Naive thymus-derived CD4-positive, alpha-beta T cell (primary cell): ENCODE measurements at regions of chr12 and their contacts with region 1.

Region 1: GRCh38 chr12:56315622-56316473 is at the start of gene CNPY2:
- DNase-seq: peak; percentile 83 to 94 (median 92)
- ATAC-seq: peak; percentile 93
- H3K4me3 ChIP-seq: peak within 1 kb of the TSS; percentile 100
- H3K4me3 Mint-ChIP-seq: peak within 1 kb of the TSS; percentile 96 to 99 (median 98)
- H3K27ac ChIP-seq: peak within 1 kb of the TSS; percentile 97
- H3K27ac Mint-ChIP-seq: peak within 1 kb of the TSS; percentile 93 to 99 (median 99)
- H3K4me1 ChIP-seq: peaks cover 13 to 16% of the 10 kb centered on the region in 2 donors
- H3K4me1 Mint-ChIP-seq: peaks cover 5 to 23% (median 13%) of the 10 kb centered on the region in 7 donors
- H3K27me3 ChIP-seq: no peaks in the 10 kb centered on the region
- H3K27me3 Mint-ChIP-seq: no peaks in the 10 kb centered on the region
- total RNA-seq, gene CNPY2: 48.4 to 134 (median 87.6) TPM

Region 2: GRCh38 chr12:56127888-56128669 is 187.8 kb before region 1 on chr12 and contains the start of gene ESYT1:
- CTCF ChIA-PET with region 1: no interaction called
- POLR2A ChIA-PET with region 1: interaction called, 3 read pairs
- intact Hi-C with region 1: loop called in 1 of 2 experiments (anchors 1 kb)
- DNase-seq: peak; percentile 75 to 100 (median 98)
- ATAC-seq: peak; percentile 94
- H3K4me3 ChIP-seq: peak within 1 kb of the TSS; percentile 77
- H3K4me3 Mint-ChIP-seq: peak within 1 kb of the TSS; percentile 95 to 100 (median 98)
- H3K27ac ChIP-seq: peak within 1 kb of the TSS; percentile 84
- H3K27ac Mint-ChIP-seq: peak within 1 kb of the TSS; percentile 86 to 99 (median 91)
- H3K4me1 ChIP-seq: peaks cover 39 to 54% of the 10 kb centered on the region in 2 donors
- H3K4me1 Mint-ChIP-seq: peaks cover 40 to 76% (median 65%) of the 10 kb centered on the region in 7 donors
- H3K27me3 ChIP-seq: no peaks in the 10 kb centered on the region
- H3K27me3 Mint-ChIP-seq: no peaks in the 10 kb centered on the region
- total RNA-seq, gene ESYT1: 121 to 300 (median 221) TPM

Region 3: DNA sequence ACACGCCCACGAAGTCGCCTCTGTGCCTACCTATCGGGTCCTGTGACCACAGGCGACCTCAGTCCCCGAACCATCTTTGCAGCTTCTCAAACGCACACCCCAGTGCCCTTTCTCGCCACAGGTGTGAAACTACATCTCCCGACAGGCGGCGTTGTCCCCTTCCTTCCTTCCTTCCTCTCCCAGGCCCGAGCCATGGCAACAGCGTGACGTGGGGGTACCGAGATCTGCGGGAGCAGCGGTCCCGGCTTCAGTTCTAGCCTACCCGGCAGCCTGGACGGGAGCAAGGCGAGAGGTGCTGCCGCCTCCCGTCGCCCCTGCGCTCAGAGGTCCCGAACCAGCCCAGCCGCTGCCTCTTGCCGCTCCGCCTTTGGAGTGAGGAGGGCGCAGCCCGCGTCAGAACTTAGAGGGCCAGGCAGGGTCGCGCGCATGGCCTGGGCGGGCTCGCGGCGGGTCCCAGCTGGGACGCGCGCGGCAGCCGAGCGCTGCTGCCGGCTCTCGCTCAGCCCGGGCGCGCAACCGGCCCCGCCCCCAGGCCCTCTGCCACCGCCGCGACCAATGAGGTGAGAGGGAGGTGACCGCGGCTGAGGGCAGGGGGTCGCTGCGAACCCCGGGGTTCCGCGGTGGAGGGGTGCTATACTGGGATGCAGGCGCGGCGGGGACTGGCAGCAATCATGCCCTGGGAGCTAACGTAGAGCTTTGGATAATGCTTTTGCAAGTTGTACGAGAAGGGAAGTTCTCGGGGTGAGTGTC is 49.0 kb before region 1 on chr12 and contains the start of gene COQ10A:
- CTCF ChIA-PET with region 1: no interaction called
- POLR2A ChIA-PET with region 1: interaction called, 3 read pairs
- intact Hi-C with region 1: loop called in 1 of 2 experiments (anchors 1 kb)
- DNase-seq: peak; percentile 78 to 92 (median 89)
- ATAC-seq: peak; percentile 93
- H3K4me3 ChIP-seq: peak within 1 kb of the TSS; percentile 88
- H3K4me3 Mint-ChIP-seq: peak within 1 kb of the TSS; percentile 83 to 100 (median 96)
- H3K27ac ChIP-seq: peak within 1 kb of the TSS; percentile 94
- H3K27ac Mint-ChIP-seq: peak within 1 kb of the TSS; percentile 89 to 97 (median 94)
- H3K4me1 ChIP-seq: peaks cover 0 to 8% of the 10 kb centered on the region in 2 donors
- H3K4me1 Mint-ChIP-seq: peaks cover 0 to 22% (median 20%) of the 10 kb centered on the region in 7 donors
- H3K27me3 ChIP-seq: no peaks in the 10 kb centered on the region
- H3K27me3 Mint-ChIP-seq: peaks cover 0 to 2% (median 0%) of the 10 kb centered on the region in 5 donors
- total RNA-seq, gene COQ10A: 22.5 to 39.4 (median 31.5) TPM

Region 4: DNA sequence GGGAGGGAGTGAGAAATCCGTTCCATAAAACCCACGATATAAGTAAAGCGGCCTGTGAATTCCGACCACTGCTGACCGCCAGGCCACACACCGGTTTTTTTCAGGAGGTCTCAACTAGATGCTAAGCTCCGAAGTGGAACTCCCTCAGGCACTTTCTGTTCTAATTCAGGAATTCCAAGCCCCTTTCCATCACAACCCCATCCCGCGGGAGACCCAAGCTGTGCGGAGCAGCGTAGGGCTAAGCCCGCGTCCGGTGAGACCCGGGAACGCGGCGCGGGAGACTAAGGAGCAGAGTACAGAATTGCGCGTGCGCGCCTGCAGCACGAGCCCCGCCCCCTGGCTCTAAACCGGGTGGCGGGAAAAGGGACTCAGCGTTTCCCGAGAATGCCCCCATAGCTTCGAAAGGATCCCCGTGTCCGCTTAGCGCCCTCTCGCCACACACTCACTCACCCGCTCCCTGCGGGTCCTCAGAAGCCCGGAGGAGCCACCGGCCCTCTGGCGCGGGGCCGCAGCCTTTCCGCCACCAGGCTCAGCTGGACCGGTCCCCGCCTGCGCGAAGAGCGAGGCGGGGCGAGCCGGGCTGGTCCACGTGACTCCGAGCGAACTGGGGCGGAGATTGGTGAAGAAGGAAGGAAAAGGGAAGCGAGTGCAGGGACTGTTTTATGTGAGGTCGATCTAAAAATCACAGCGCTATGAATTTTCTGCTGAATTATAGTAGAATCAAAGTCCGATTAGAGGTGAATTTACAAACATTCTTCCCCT is 133.2 kb after region 1 on chr12 and contains the start of gene TIMELESS:
- CTCF ChIA-PET with region 1: interaction called, 3 read pairs
- POLR2A ChIA-PET with region 1: interaction called, 18 read pairs
- intact Hi-C with region 1: loop called (anchors 1 kb)
- DNase-seq: peak; percentile 74 to 89 (median 85)
- ATAC-seq: peak; percentile 98
- H3K4me3 ChIP-seq: peak within 1 kb of the TSS; percentile 97
- H3K4me3 Mint-ChIP-seq: peak within 1 kb of the TSS; percentile 77 to 94 (median 92)
- H3K27ac ChIP-seq: peak within 1 kb of the TSS; percentile 74
- H3K27ac Mint-ChIP-seq: peak within 1 kb of the TSS; percentile 86 to 98 (median 93)
- H3K4me1 ChIP-seq: peaks cover 0 to 7% of the 10 kb centered on the region in 2 donors
- H3K4me1 Mint-ChIP-seq: peaks cover 12 to 36% (median 24%) of the 10 kb centered on the region in 7 donors
- H3K27me3 ChIP-seq: no peaks in the 10 kb centered on the region
- H3K27me3 Mint-ChIP-seq: no peaks in the 10 kb centered on the region
- total RNA-seq, gene TIMELESS: 4.4 to 42.3 (median 5.4) TPM

Region 5: DNA sequence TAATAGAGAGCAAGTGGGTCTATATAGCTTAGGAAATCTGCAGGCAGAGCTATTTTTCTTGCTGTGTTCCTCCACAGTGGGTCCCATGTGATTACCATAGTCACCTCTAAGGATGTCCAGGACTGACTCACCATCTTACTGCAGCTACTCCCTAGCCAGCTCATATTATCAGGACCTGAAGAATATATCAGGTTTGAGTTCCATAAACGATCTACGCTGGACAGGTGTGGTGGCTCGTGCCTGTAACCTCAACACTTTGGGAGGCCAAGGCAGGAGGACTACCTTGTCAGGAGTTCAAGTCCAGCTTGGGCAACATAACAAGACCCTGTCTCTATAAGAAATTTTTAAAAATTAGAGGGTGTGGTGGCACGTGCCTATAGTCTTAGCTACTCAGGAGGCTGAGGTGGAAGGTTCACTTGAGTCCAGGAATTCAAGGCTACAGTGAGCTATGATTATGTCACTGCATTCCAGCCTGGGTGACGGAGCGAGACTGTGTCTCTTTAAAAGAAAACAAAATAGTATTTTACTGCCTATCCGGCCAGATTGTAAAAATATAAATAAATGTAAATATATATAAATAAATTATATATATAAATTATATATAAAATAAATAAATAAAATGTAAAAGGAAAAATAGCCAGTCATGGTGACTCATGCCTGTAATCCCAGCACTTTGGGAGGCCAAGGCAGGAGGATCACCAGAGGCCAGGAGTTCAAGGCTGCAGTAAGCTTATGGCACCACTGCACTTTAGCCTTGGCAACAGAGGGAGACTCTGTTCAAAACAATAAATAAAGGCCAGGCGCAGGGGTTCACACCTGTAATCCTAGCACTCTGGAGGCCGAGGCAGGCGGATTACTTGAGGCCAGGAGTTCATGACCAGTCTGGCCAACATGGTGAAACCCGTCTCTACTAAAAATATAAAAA is 145.6 kb after region 1 on chr12:
- CTCF ChIA-PET with region 1: interaction called, 10 read pairs
- POLR2A ChIA-PET with region 1: interaction called, 12 read pairs
- intact Hi-C with region 1: loop called (anchors 1 kb)
- DNase-seq: no peak
- ATAC-seq: no peak
- H3K4me3 ChIP-seq: no peak overlapping the region
- H3K4me3 Mint-ChIP-seq: no peak overlapping the region
- H3K27ac ChIP-seq: no peak overlapping the region
- H3K27ac Mint-ChIP-seq: no peak overlapping the region
- H3K4me1 ChIP-seq: peaks cover 0 to 6% of the 10 kb centered on the region in 2 donors
- H3K4me1 Mint-ChIP-seq: peaks cover 0 to 10% (median 5%) of the 10 kb centered on the region in 7 donors
- H3K27me3 ChIP-seq: no peaks in the 10 kb centered on the region
- H3K27me3 Mint-ChIP-seq: no peaks in the 10 kb centered on the region

Region 6: DNA sequence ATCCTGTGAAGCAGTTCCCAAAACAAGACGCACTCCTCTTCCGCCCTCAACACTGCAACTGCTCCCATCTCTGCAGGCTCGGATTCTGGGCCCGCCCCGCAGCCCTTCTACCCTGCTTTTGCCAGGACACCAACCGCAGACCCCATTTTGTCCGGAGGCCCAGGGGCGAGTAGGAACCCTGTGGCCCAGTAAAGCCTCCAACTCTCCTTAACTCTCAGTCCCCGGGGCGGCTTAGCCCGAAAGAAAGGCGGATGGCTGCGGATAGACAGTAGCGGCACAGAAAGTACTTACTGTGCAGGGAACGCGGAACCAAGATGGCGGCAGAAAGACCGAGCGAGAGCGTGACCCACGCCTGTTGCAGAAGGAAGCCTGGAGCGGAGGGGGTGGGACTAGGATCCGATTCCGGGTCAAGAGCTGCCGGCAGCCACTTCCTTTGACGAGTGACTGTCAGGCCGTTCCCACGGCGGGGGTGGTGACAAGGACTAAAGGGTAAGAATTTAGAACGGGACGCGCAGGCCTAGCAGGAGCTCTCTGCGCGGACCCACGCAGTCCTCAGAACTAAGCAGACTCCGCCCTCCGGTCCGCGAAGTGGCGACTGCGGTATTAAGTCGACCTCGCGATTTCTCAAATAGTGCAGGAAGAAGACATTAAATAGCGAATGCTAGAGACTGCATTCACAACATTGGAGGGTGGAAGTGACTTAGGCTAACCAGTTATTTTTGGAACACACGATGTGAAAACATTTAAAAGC is 409.3 kb after region 1 on chr12 and contains the start of gene NACA:
- CTCF ChIA-PET with region 1: no interaction called
- POLR2A ChIA-PET with region 1: no interaction called
- intact Hi-C with region 1: loop called in 1 of 2 experiments (anchors 1 kb)
- DNase-seq: peak; percentile 85 to 99 (median 96)
- ATAC-seq: peak; percentile 95
- H3K4me3 ChIP-seq: peak within 1 kb of the TSS; percentile 100
- H3K4me3 Mint-ChIP-seq: peak within 1 kb of the TSS; percentile 94 to 100 (median 97)
- H3K27ac ChIP-seq: peak within 1 kb of the TSS; percentile 87
- H3K27ac Mint-ChIP-seq: peak within 1 kb of the TSS; percentile 94 to 100 (median 98)
- H3K4me1 ChIP-seq: peaks cover 40 to 43% of the 10 kb centered on the region in 2 donors
- H3K4me1 Mint-ChIP-seq: peaks cover 39 to 53% (median 49%) of the 10 kb centered on the region in 7 donors
- H3K27me3 ChIP-seq: no peaks in the 10 kb centered on the region
- H3K27me3 Mint-ChIP-seq: no peaks in the 10 kb centered on the region
- total RNA-seq, gene NACA: 834 to 1,486 (median 1,355) TPM